K562 (cell line): ENCODE measurements at regions of chr14 and their contacts with region 1.

Region 1: GRCh38 chr14:88189417-88190191 is 133.5 kb downstream of the KCNK10 start:
- DNase-seq: peak; percentile 26 to 80 (median 43)
- ATAC-seq: peak; percentile 96
- H3K4me3 ChIP-seq: no peak overlapping the region
- H3K27ac ChIP-seq: no peak overlapping the region
- H3K4me1 ChIP-seq: no peaks in the 10 kb centered on the region
- H3K27me3 ChIP-seq: peaks cover 5 to 24% of the 10 kb centered on the region in 2 experiments; a peak in 3 of 5 replicates
- CTCF ChIP-seq: peak; percentile 54 to 75 (median 59); a peak in 5 of 6 replicates
- EP300 ChIP-seq: no peak
- POLR2A ChIP-seq: no peak
- RAD21 ChIP-seq: peak; percentile 42 to 74

Region 2: DNA sequence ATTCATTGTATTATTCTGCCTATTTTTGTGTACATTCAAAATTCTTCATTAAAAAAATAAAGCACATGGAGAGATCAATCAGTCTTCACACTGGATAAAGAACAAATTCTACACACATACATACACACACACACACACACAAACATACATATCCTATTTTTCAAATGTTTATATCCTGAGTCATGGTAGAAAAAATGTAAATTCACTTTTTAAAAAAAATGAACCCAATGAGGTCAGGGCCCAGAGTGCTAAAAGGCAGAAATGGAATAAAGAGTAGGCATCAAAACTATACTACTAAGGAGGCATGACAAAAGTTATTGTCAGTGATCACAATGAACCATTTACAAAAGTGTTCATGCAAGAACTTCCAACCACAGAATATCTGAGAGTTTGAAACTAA is 214.0 kb before region 1 on chr14:
- CTCF ChIA-PET with region 1: no interaction called
- POLR2A ChIA-PET with region 1: no interaction called
- in situ Hi-C with region 1: no loop called
- intact Hi-C with region 1: no loop called
- DNase-seq: no peak
- ATAC-seq: no peak
- H3K4me3 ChIP-seq: no peak overlapping the region
- H3K27ac ChIP-seq: no peak overlapping the region
- H3K4me1 ChIP-seq: no peaks in the 10 kb centered on the region; a peak in 1 of 5 replicates
- H3K27me3 ChIP-seq: no peaks in the 10 kb centered on the region
- CTCF ChIP-seq: no peak
- EP300 ChIP-seq: no peak
- POLR2A ChIP-seq: no peak
- RAD21 ChIP-seq: no peak

Region 3: GRCh38 chr14:88233915-88234314 is 44.3 kb after region 1 on chr14:
- CTCF ChIA-PET with region 1: no interaction called
- POLR2A ChIA-PET with region 1: no interaction called
- in situ Hi-C with region 1: no loop called
- intact Hi-C with region 1: loop called (anchors 1 kb)
- DNase-seq: peak; percentile 6 to 32 (median 12)
- ATAC-seq: peak; percentile 69
- H3K4me3 ChIP-seq: no peak overlapping the region
- H3K27ac ChIP-seq: no peak overlapping the region
- H3K4me1 ChIP-seq: no peaks in the 10 kb centered on the region
- H3K27me3 ChIP-seq: no peaks in the 10 kb centered on the region
- CTCF ChIP-seq: peak; percentile 43 to 53 (median 48); a peak in 4 of 6 replicates
- EP300 ChIP-seq: no peak
- POLR2A ChIP-seq: no peak
- RAD21 ChIP-seq: peak; percentile 39 to 46

Region 4: GRCh38 chr14:88270776-88271175 is 81.2 kb after region 1 on chr14:
- CTCF ChIA-PET with region 1: no interaction called
- POLR2A ChIA-PET with region 1: no interaction called
- in situ Hi-C with region 1: no loop called
- intact Hi-C with region 1: no loop called
- DNase-seq: no peak
- ATAC-seq: no peak
- H3K4me3 ChIP-seq: no peak overlapping the region
- H3K27ac ChIP-seq: no peak overlapping the region
- H3K4me1 ChIP-seq: no peaks in the 10 kb centered on the region
- H3K27me3 ChIP-seq: peaks cover 0 to 6% of the 10 kb centered on the region in 2 experiments; a peak in 2 of 5 replicates
- CTCF ChIP-seq: no peak
- EP300 ChIP-seq: no peak
- POLR2A ChIP-seq: no peak
- RAD21 ChIP-seq: no peak

Region 5: GRCh38 chr14:88380405-88380804 is 190.8 kb after region 1 on chr14:
- CTCF ChIA-PET with region 1: no interaction called
- POLR2A ChIA-PET with region 1: no interaction called
- in situ Hi-C with region 1: no loop called
- intact Hi-C with region 1: loop called (anchors 5 kb)
- DNase-seq: no peak
- ATAC-seq: no peak
- H3K4me3 ChIP-seq: no peak overlapping the region
- H3K27ac ChIP-seq: no peak overlapping the region
- H3K4me1 ChIP-seq: peaks cover 2 to 3% of the 10 kb centered on the region in 2 experiments; a peak in 2 of 5 replicates
- H3K27me3 ChIP-seq: no peaks in the 10 kb centered on the region
- CTCF ChIP-seq: peak in 1 of 3 experiments; percentile 11; a peak in 1 of 6 replicates
- EP300 ChIP-seq: no peak
- POLR2A ChIP-seq: no peak
- RAD21 ChIP-seq: peak in 1 of 2 experiments; percentile 33; a peak in 2 of 4 replicates